Testis (tissue), 5 donors: ENCODE measurements at regions of chr12 and their contacts with region 1.

Region 1: DNA sequence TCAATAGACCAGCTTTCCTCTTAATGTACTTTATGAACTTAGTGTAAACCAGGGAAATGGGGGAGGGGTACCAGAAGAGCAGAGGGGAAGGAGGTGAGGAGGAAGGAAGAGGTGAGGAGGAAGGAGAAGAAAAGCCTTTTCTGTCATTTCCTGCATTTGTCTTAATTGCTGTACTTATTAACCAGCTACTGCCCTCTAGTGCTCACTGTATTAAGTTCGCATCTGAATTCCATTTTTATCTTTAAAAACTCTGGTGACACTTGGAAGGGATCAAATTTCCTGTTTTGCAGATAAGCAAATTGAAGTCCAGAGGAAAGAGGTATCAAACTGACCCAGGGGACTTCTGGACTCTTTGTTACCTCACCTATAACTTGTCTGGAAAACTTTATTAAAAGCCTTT is 22.2 kb downstream of the MANSC1 start:
- DNase-seq: no peak
- H3K4me3 ChIP-seq: no peak overlapping the region
- H3K27ac ChIP-seq: no peak overlapping the region
- H3K4me1 ChIP-seq: no peaks in the 10 kb centered on the region
- H3K27me3 ChIP-seq: no peaks in the 10 kb centered on the region
- CTCF ChIP-seq: peak; percentile 26 to 51 (median 50)
- POLR2A ChIP-seq: no peak

Region 2: GRCh38 chr12:12081836-12082497 is 245.8 kb before region 1 on chr12:
- intact Hi-C with region 1: loop called (anchors 10 kb)
- DNase-seq: no peak
- H3K4me3 ChIP-seq: no peak overlapping the region
- H3K27ac ChIP-seq: no peak overlapping the region
- H3K4me1 ChIP-seq: no peaks in the 10 kb centered on the region
- H3K27me3 ChIP-seq: no peaks in the 10 kb centered on the region
- CTCF ChIP-seq: peak in 1 of 3 experiments; percentile 15
- POLR2A ChIP-seq: no peak

Region 3: GRCh38 chr12:12201274-12201758 is 126.5 kb before region 1 on chr12:
- intact Hi-C with region 1: no loop called
- DNase-seq: no peak
- H3K4me3 ChIP-seq: no peak overlapping the region
- H3K27ac ChIP-seq: no peak overlapping the region
- H3K4me1 ChIP-seq: no peaks in the 10 kb centered on the region
- H3K27me3 ChIP-seq: no peaks in the 10 kb centered on the region
- CTCF ChIP-seq: no peak
- POLR2A ChIP-seq: no peak

Region 4: DNA sequence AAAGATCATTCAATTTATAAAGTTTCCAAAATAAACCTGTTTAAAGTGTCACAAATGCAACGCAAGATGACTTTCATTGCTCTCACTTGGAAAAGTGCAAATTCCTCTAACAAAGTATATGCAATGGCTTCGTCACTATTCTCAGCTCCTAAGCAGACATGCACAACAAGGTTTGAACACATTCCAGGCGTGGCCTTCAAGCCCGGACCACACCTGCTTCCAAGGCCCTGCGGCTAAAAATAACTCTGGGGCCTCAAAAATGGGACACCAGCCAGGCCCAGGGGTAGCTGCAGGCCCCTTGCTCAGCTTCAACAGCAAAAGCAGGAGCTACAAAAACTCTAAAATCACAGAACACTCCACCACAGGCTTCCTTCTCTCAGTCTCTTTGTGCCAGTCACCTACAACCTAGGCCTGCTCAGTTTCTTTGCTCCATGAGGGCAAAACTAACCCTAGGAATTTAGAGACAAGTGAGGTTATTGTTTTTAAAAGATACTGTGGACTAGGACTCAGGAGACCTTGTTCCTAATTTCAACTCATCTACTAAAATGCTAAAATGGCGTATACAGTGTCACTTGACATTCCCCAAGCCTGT is 205.5 kb after region 1 on chr12:
- intact Hi-C with region 1: no loop called
- DNase-seq: peak; percentile 66
- H3K4me3 ChIP-seq: no peak overlapping the region
- H3K27ac ChIP-seq: peak overlapping the region; percentile 69 to 74
- H3K4me1 ChIP-seq: peaks cover 20% of the 10 kb centered on the region
- H3K27me3 ChIP-seq: no peaks in the 10 kb centered on the region
- CTCF ChIP-seq: no peak
- POLR2A ChIP-seq: no peak